WTC11 (cell line): ENCODE measurements at regions of chr17 and their contacts with region 1.

Region 1: DNA sequence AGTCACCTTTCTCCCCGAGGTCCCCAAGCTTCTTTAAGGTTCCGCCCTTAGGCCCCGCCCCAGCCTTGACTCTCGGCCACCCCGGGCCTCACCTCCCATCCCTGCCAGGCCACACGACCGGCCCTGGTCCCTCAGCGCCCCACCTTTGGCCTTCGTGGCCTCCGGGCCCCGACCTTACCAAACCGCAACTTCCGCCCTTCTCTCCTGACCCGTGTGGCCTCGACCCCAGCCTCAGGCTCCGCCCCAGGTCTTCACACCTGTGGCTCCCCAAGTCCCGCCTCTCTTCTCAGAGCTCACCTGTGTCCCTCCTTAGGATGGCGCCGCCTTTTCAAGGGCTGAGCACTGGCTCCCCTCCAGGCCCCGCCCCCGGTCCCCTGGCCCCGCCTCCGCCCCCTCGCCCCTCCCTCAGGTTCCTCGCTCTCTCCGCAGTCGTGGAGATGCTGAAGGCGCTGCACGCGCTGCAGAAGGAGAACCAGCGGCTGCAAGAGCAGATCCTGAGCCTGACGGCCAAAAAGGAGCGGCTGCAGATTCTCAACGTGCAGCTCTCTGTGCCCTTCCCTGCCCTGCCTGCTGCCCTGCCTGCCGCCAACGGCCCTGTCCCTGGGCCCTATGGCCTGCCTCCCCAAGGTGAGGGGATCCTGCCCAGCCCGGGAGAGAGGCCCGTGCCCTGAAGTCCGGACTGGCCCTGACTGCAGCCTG is 10.0 kb upstream of the CISD3 start:
- DNase-seq: peak; percentile 85
- ATAC-seq: peak; percentile 69
- H3K4me3 Mint-ChIP-seq: peak overlapping the region; percentile 54
- H3K27ac Mint-ChIP-seq: no peak overlapping the region
- H3K4me1 Mint-ChIP-seq: peaks cover 39% of the 10 kb centered on the region
- H3K27me3 Mint-ChIP-seq: peaks cover 12% of the 10 kb centered on the region
- CTCF ChIP-seq: no peak

Region 2: DNA sequence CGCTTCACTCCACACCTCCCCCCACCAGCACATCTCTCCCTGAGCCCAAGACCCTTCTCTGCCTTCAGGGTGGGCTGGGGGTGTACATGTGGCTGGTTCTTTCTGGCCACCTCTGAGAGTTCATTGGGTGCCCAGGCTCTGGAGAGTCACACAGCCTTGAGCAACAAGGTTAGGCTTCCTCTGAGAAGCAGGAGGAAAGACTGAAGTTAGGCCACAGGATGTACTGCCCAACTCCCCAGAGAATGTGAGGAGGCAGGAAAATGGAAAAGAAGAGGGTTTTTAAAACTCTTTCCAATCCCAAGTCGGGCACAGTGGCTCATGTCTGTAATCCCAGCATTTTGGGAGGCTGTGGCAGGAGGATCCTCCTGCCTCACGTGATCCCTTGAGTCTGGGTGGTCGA is 20.7 kb after region 1 on chr17:
- CTCF ChIA-PET with region 1: no interaction called
- POLR2A ChIA-PET with region 1: no interaction called
- DNase-seq: no peak
- ATAC-seq: no peak
- H3K4me3 Mint-ChIP-seq: no peak overlapping the region
- H3K27ac Mint-ChIP-seq: no peak overlapping the region; the same call in 1 of the 2 replicates
- H3K4me1 Mint-ChIP-seq: peaks cover 44% of the 10 kb centered on the region
- H3K27me3 Mint-ChIP-seq: no peaks in the 10 kb centered on the region
- CTCF ChIP-seq: no peak

Region 3: GRCh38 chr17:38885044-38885727 is 165.1 kb after region 1 on chr17:
- CTCF ChIA-PET with region 1: no interaction called
- POLR2A ChIA-PET with region 1: interaction called, 10 read pairs
- DNase-seq: no peak
- ATAC-seq: no peak
- H3K4me3 Mint-ChIP-seq: no peak overlapping the region
- H3K27ac Mint-ChIP-seq: peak overlapping the region; percentile 75
- H3K4me1 Mint-ChIP-seq: peaks cover 67% of the 10 kb centered on the region
- H3K27me3 Mint-ChIP-seq: no peaks in the 10 kb centered on the region
- CTCF ChIP-seq: no peak